Mammary epithelial cell (primary cell): ENCODE measurements at regions of chr21 and their contacts with region 1.

Region 1: DNA sequence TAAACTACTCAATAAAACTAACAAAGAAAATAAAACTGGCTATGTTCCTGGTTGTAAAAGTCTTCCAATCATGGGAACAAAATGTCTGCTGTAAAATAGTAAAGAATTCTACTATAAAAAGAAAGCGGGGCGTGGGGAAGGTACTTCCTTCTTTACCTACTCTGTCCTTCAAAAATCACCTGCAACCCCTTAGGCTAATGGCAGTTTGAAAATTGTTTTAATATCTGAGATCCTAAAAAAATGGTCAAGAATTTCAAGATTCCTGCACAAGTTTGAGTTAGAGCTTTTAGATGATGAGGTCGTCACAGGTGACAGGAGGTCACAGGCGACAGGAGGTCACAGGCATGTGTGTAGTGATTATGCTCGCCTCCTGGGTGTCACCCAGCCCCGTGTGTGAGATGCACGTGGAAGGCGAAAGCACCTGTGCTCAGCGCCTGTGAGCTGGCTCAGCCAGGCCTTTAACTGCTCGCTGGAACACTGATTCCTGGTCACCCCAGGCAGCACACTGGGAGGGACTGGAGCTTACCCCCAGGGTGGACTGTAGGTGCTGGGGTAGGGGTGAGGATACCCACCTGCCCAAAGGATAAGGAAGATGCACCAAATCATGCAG is 18.6 kb upstream of the TMPRSS2 start:
- DNase-seq: no peak
- H3K4me3 ChIP-seq: no peak overlapping the region
- H3K27ac ChIP-seq: no peak overlapping the region
- H3K4me1 ChIP-seq: no peaks in the 10 kb centered on the region
- H3K27me3 ChIP-seq: no peaks in the 10 kb centered on the region
- CTCF ChIP-seq: no peak

Region 2: GRCh38 chr21:41564871-41565274 is 38.3 kb after region 1 on chr21:
- CTCF ChIA-PET with region 1: no interaction called
- dilution Hi-C with region 1: loop called (anchors 5 kb)
- in situ Hi-C with region 1: no loop called
- intact Hi-C with region 1: no loop called
- DNase-seq: peak; percentile 32
- H3K4me3 ChIP-seq: no peak overlapping the region
- H3K27ac ChIP-seq: no peak overlapping the region
- H3K4me1 ChIP-seq: no peaks in the 10 kb centered on the region
- H3K27me3 ChIP-seq: no peaks in the 10 kb centered on the region
- CTCF ChIP-seq: no peak